Activated CD4-positive, alpha-beta T cell treated with anti-CD3 and anti-CD28 coated beads for 36 hours (primary cell): ENCODE measurements at regions of chr2 and their contacts with region 1.

Region 1: DNA sequence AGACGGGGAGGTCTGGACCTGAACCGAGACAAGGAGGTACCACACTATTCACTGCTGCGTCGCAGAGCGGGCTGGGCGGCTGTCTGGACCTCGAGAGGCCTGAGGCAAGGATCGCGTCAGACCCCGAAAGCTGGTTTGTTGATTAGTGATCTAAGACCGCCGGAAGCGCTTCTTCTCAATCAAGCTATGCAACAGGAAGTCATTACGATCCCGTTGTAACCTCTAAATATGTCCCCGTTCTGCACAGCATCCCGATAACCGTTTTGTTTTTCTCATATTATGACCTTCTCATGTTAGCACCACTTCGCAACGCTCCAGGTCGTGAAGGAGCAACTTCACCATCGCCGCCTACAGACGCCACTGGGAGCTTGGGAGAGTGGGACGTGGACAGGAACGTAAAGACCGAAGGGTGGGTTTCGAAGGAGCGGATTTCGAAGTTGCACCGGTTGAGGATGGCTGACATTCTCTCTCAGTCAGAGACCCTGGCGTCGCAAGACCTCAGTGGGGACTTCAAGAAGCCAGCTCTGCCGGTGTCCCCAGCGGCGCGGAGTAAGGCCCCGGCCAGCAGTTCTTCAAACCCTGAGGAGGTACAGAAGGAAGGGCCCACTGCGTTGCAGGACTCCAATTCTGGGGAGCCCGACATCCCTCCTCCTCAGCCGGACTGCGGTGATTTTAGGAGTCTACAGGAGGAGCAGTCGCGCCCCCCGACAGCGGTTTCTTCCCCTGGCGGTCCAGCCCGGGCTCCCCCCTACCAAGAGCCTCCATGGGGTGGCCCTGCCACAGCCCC is at the starts of genes SLC4A1AP and SUPT7L:
- DNase-seq: peak; percentile 80
- ATAC-seq: peak; percentile 81
- H3K4me3 Mint-ChIP-seq: peak within 1 kb of the TSS; percentile 98
- H3K27ac Mint-ChIP-seq: peak within 1 kb of the TSS; percentile 100
- H3K4me1 Mint-ChIP-seq: peaks cover 42% of the 10 kb centered on the region
- H3K27me3 Mint-ChIP-seq: no peaks in the 10 kb centered on the region
- total RNA-seq, gene SLC4A1AP: 23.8 to 25.3 TPM
- total RNA-seq, gene SUPT7L: 23.7 to 26.1 TPM

Region 2: GRCh38 chr2:27421028-27421427 is 242.6 kb before region 1 on chr2:
- CTCF ChIA-PET with region 1: no interaction called
- POLR2A ChIA-PET with region 1: no interaction called
- intact Hi-C with region 1: no loop called
- DNase-seq: no peak
- ATAC-seq: no peak
- H3K4me3 Mint-ChIP-seq: no peak overlapping the region
- H3K27ac Mint-ChIP-seq: no peak overlapping the region
- H3K4me1 Mint-ChIP-seq: no peaks in the 10 kb centered on the region
- H3K27me3 Mint-ChIP-seq: no peaks in the 10 kb centered on the region

Region 3: DNA sequence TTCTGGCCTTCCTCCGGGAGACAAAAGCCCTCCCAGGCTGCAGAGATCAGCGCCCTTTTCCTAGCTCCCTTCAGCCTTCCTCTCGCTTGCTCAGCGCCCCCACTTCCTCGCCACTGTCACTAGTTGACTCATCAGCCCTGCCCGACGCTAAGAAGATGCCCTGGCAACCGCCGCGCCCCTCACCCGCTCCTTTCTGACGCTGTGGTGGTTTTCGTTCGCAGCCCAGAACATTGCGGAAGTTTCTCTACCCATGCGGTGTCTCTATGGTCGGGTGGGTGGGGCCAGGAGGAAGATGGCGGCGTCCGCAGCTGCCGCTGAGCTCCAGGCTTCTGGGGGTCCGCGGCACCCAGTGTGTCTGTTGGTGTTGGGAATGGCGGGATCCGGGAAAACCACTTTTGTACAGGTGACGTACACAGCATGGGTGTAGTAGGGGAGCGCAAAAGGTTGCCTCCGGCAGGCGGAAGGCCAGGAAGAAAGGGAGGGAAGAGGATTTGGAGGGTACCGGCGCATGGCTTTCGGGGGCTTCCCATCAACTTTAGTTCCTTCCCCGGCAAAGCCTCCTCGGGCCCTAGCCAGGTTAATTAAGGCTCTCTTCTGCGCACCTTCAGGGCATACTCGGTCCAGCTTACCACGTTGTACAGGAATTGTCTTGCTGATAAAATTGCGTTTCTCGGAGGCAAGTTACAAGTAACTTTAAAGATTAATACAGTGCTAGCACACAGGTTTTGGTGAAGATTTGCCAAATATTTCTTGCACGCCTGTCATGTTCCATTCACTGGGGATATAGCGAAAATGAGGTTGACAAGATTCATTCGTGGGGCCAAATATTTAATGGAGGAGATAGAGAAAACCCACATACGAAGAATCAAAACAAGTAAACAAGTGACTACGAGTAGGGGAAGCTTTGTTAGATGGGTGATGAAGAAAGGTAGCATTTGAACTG is 34.6 kb before region 1 on chr2 and contains the starts of genes CCDC121 and GPN1:
- CTCF ChIA-PET with region 1: no interaction called
- POLR2A ChIA-PET with region 1: interaction called, 12 read pairs
- intact Hi-C with region 1: loop called (anchors 1 to 5 kb)
- DNase-seq: peak; percentile 98
- ATAC-seq: peak; percentile 96
- H3K4me3 Mint-ChIP-seq: no peak within 1 kb of the TSS
- H3K27ac Mint-ChIP-seq: no peak within 1 kb of the TSS
- H3K4me1 Mint-ChIP-seq: peaks cover 37% of the 10 kb centered on the region
- H3K27me3 Mint-ChIP-seq: no peaks in the 10 kb centered on the region
- total RNA-seq, gene CCDC121: 0.11 to 0.44 TPM
- total RNA-seq, gene GPN1: 45.6 to 63.9 TPM